Activated naive CD4-positive, alpha-beta T cell treated with anti-CD3 and anti-CD28 coated beads for 36 hours (primary cell): ENCODE measurements at regions of chr2 and their contacts with region 1.

Region 1: DNA sequence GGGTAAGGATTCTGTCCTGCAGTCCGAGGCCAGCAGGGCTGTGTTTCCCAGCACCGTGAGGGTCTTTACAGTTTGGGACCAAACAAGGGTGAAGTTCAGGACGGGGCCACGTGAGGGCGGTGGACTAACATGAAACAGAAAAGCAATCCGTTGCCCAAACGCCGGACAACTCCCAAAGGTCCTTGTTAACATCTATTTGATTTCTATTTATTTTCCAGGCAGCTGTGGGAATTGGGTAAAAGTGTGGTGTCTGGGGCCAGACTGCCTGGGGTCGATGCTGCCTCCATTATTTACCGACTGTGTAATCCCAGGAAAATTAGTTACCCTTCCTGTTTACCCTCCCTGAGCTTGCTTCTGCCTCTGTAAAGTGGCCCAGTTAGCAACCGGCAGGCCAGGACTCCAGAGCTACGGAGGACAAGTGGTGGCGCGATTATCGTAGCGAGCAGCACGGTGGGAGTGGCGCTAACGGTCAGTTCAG is 66.3 kb upstream of the TCF7L1 start:
- DNase-seq: peak; percentile 65
- H3K4me3 Mint-ChIP-seq: peak overlapping the region; percentile 24
- H3K27ac Mint-ChIP-seq: no peak overlapping the region
- H3K4me1 Mint-ChIP-seq: peaks cover 4% of the 10 kb centered on the region
- H3K27me3 Mint-ChIP-seq: peaks cover 14% of the 10 kb centered on the region

Region 2: DNA sequence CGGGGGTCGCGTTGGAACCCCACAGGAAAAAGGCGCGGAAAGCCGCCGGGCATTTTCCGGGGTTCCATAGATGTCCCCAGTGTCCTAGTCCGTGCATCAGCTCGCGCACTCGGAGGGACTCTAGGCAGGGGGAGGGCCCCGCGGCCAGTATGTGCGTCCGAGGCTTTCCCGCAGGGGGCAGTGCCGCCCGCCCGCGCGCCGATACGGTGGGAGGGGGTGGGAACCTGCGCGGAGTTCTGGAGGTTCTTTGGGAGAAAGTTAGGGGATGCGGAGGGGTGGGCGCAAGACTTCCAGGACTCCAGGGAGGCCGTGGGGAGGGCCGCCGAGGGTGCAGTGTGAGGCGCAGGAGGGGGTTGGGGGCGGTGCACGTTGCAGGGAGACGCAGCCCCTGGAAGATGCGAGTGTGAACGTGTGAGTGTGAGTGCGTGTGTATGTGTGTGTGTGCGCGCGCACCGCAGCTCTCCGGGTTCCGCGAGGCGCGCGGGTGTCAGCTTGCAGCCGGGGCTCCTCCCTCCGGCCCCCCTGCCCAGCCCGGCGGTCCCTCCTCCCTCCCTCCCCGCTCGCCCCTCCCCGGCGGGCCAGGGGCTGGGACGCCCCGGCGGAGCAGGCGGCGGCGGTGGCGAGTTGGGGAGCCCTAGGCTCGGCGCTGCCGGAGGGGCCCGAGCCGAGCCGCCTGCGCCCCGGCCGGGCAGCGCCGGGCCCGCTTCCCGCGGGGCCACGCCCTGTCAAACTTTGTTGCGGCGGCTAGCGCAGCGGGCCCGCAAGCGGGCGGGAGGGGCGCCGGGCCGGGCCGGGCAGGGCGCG is 66.1 kb after region 1 on chr2 and contains the start of gene TCF7L1:
- CTCF ChIA-PET with region 1: no interaction called
- intact Hi-C with region 1: no loop called
- DNase-seq: peak; percentile 52
- H3K4me3 Mint-ChIP-seq: peak within 1 kb of the TSS; percentile 67
- H3K27ac Mint-ChIP-seq: no peak within 1 kb of the TSS
- H3K4me1 Mint-ChIP-seq: peaks cover 9% of the 10 kb centered on the region
- H3K27me3 Mint-ChIP-seq: peaks cover 53% of the 10 kb centered on the region
- total RNA-seq, gene TCF7L1: 0.07 TPM in 1 of 2 experiments, not detected in the other

Region 3: GRCh38 chr2:85199698-85200097 is 132.8 kb after region 1 on chr2:
- CTCF ChIA-PET with region 1: no interaction called
- intact Hi-C with region 1: no loop called
- DNase-seq: no peak
- H3K4me3 Mint-ChIP-seq: no peak overlapping the region
- H3K27ac Mint-ChIP-seq: no peak overlapping the region
- H3K4me1 Mint-ChIP-seq: no peaks in the 10 kb centered on the region
- H3K27me3 Mint-ChIP-seq: peaks cover 3% of the 10 kb centered on the region

Region 4: DNA sequence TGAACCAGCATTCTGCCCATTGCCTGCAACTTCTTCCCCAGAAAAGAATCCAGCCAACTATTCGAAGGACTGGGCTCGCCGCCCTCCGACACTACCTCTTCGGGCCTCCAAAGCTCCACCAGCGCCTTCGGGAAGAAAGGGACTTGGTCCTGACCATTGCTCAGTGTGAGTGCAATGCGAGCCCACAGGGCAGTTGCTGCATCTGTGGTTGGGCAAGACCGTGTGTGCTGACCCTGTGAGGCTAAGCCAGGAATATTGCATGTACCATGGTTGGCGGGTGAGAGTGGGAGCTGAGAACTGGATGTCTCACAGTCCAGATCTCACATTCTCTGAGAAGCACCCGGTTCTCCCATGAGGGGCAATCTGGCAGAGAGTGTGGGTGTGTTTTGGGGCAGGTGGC is 304.1 kb after region 1 on chr2:
- CTCF ChIA-PET with region 1: no interaction called
- intact Hi-C with region 1: loop called (anchors 5 kb)
- DNase-seq: no peak
- H3K4me3 Mint-ChIP-seq: no peak overlapping the region
- H3K27ac Mint-ChIP-seq: no peak overlapping the region
- H3K4me1 Mint-ChIP-seq: no peaks in the 10 kb centered on the region
- H3K27me3 Mint-ChIP-seq: no peaks in the 10 kb centered on the region